Ovary (tissue), 10 donors: ENCODE measurements at regions of chr6 and their contacts with region 1.

Region 1: GRCh38 chr6:30719791-30720737 is at the start of gene TUBB:
- DNase-seq: peak; percentile 94 to 97 (median 96)
- H3K4me3 ChIP-seq: peak within 1 kb of the TSS; percentile 89
- H3K27ac ChIP-seq: peak within 1 kb of the TSS; percentile 73 to 94
- H3K4me1 ChIP-seq: peaks cover 2% of the 10 kb centered on the region
- H3K27me3 ChIP-seq: no peaks in the 10 kb centered on the region
- CTCF ChIP-seq: peak in 1 of 3 donors; percentile 23
- EP300 ChIP-seq: no peak
- POLR2A ChIP-seq: peak; percentile 78
- total RNA-seq, gene TUBB: 242 to 697 (median 630) TPM

Region 2: GRCh38 chr6:29028821-29029220 is 1691.2 kb before region 1 on chr6:
- intact Hi-C with region 1: no loop called
- DNase-seq: no peak
- H3K4me3 ChIP-seq: no peak overlapping the region
- H3K27ac ChIP-seq: no peak overlapping the region
- H3K4me1 ChIP-seq: no peaks in the 10 kb centered on the region
- H3K27me3 ChIP-seq: no peaks in the 10 kb centered on the region
- CTCF ChIP-seq: no peak
- EP300 ChIP-seq: no peak
- POLR2A ChIP-seq: no peak

Region 3: DNA sequence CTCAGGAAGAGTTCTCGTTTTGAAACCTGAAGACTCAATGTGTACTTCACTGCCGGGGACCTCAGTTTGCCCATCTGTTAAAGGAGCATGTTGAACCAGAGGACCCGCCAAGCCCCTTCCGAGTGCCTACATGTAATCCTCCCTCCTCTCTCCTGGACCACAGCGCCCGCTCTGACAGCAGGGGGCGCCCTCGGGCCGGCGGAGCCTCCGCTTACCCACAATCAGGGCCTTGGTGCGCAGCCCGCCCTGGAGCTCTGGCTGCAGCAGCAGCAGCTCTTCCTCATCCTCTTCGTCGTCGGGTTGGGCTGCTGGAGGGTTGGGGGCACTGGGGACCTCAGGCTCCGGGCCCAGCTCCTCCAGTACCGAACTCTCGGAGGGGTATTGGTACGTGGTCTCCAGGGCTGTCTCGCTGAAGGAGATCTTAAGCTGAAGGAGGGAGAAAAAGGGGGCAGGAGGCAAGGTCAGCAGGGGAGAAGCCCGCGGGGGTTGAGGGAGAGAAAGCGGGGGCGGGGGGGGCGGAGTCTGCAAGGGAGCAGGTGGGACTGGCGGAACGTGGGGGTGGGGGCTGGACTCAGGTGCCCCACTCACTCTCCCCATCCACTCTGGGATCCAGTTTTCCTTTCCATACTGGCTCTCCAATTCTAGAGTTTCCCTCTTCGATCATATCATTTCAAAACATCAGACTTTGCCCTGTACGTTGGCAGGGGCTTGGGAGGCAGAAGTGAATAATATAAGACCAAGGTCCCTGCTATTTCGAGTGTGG is 40.9 kb before region 1 on chr6:
- intact Hi-C with region 1: loop called (anchors 1 to 2 kb)
- DNase-seq: peak; percentile 79 to 92 (median 90)
- H3K4me3 ChIP-seq: no peak overlapping the region
- H3K27ac ChIP-seq: peak overlapping the region in 1 of 2 donors; percentile 2
- H3K4me1 ChIP-seq: peaks cover 10% of the 10 kb centered on the region
- H3K27me3 ChIP-seq: no peaks in the 10 kb centered on the region
- CTCF ChIP-seq: peak; percentile 89 to 96 (median 96)
- EP300 ChIP-seq: no peak
- POLR2A ChIP-seq: no peak

Region 4: DNA sequence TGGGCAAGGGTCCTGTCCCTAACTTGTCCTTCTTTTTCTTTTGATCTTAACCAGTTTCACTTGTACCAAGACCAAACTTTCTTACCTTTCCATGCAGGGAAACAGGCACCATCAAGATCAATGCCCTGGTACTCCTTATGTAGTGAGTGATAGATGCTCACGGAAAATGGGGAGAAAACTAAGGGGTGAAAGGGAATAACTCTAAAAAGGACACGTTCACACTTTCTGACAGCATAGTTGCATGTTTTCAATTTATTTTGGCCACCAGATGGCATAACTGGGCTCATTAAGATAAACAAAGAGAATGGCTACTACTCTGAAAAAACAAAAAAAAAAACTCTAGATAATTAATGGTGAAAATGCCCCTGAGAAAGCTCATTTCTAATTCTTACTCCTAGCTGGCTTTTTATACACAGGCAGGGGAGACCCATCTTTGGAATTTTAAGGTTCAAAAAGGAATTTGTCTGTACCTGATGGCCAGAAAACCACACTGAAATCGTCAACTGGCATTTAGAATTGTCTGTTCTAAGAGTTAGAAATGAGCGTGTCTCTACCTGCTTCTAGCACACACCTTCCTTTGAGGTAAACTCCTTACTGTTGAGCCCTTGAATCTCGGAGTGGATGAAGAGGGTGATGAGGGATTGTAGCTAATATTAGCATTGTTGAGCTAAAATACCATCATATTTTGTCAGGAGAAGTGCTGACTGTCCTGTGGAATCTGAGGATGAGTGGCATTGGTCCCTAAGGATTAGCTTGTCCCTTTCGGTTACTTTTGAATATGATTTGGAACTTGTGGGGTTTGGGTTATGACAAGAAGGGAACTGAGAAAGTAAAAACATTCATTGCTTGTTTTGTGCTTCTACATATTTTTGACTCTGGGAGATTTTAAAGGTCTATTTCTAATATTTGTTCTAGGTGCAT is 102.1 kb after region 1 on chr6:
- intact Hi-C with region 1: no loop called
- DNase-seq: no peak
- H3K4me3 ChIP-seq: no peak overlapping the region
- H3K27ac ChIP-seq: no peak overlapping the region
- H3K4me1 ChIP-seq: peaks cover 2% of the 10 kb centered on the region
- H3K27me3 ChIP-seq: no peaks in the 10 kb centered on the region
- CTCF ChIP-seq: peak in 2 of 3 donors; percentile 45 to 48
- EP300 ChIP-seq: no peak
- POLR2A ChIP-seq: no peak

Region 5: GRCh38 chr6:31128093-31128676 is 408.1 kb after region 1 on chr6:
- intact Hi-C with region 1: no loop called
- DNase-seq: peak; percentile 45 to 71 (median 68)
- H3K4me3 ChIP-seq: no peak overlapping the region
- H3K27ac ChIP-seq: no peak overlapping the region
- H3K4me1 ChIP-seq: peaks cover 2% of the 10 kb centered on the region
- H3K27me3 ChIP-seq: no peaks in the 10 kb centered on the region
- CTCF ChIP-seq: peak; percentile 43 to 72 (median 47)
- EP300 ChIP-seq: no peak
- POLR2A ChIP-seq: no peak

Region 6: GRCh38 chr6:32501016-32501415 is 1781.0 kb after region 1 on chr6:
- intact Hi-C with region 1: no loop called
- DNase-seq: no peak
- H3K4me3 ChIP-seq: no peak overlapping the region
- H3K27ac ChIP-seq: no peak overlapping the region
- H3K4me1 ChIP-seq: no peaks in the 10 kb centered on the region
- H3K27me3 ChIP-seq: no peaks in the 10 kb centered on the region
- CTCF ChIP-seq: no peak
- EP300 ChIP-seq: no peak
- POLR2A ChIP-seq: no peak